CD8-positive, alpha-beta T cell (primary cell): ENCODE measurements at regions of chr11 and their contacts with region 1.

Region 1: GRCh38 chr11:14643697-14644225 is at the start of gene PDE3B:
- DNase-seq: peak; percentile 57 to 87 (median 74)
- ATAC-seq: peak; percentile 53
- H3K4me3 ChIP-seq: peak within 1 kb of the TSS; percentile 86 to 95
- H3K4me3 Mint-ChIP-seq: peak within 1 kb of the TSS; percentile 91
- H3K27ac ChIP-seq: peak within 1 kb of the TSS; percentile 66 to 86
- H3K27ac Mint-ChIP-seq: peak within 1 kb of the TSS; percentile 91
- H3K4me1 ChIP-seq: peaks cover 41% of the 10 kb centered on the region
- H3K4me1 Mint-ChIP-seq: peaks cover 54% of the 10 kb centered on the region
- H3K27me3 ChIP-seq: no peaks in the 10 kb centered on the region
- H3K27me3 Mint-ChIP-seq: no peaks in the 10 kb centered on the region
- CTCF ChIP-seq: no peak
- total RNA-seq, gene PDE3B: 144 to 146 TPM

Region 2: GRCh38 chr11:14519917-14520746 is 123.6 kb before region 1 on chr11 and contains the start of gene PSMA1:
- CTCF ChIA-PET with region 1: interaction called, 5 read pairs
- POLR2A ChIA-PET with region 1: interaction called, 6 read pairs
- intact Hi-C with region 1: loop called (anchors 2 to 5 kb)
- DNase-seq: peak; percentile 74 to 95 (median 90)
- ATAC-seq: peak; percentile 90
- H3K4me3 ChIP-seq: peak within 1 kb of the TSS; percentile 82 to 84
- H3K4me3 Mint-ChIP-seq: peak within 1 kb of the TSS; percentile 98
- H3K27ac ChIP-seq: peak within 1 kb of the TSS; percentile 82 to 87
- H3K27ac Mint-ChIP-seq: peak within 1 kb of the TSS; percentile 97
- H3K4me1 ChIP-seq: peaks cover 19% of the 10 kb centered on the region
- H3K4me1 Mint-ChIP-seq: peaks cover 32% of the 10 kb centered on the region
- H3K27me3 ChIP-seq: no peaks in the 10 kb centered on the region
- H3K27me3 Mint-ChIP-seq: no peaks in the 10 kb centered on the region
- CTCF ChIP-seq: no peak
- total RNA-seq, gene PSMA1: 177 to 193 TPM

Region 3: GRCh38 chr11:14554959-14555358 is 88.8 kb before region 1 on chr11:
- CTCF ChIA-PET with region 1: interaction called, 3 read pairs
- POLR2A ChIA-PET with region 1: interaction called, 19 read pairs
- intact Hi-C with region 1: loop called in 1 of 2 experiments (anchors 5 kb)
- DNase-seq: peak in 4 of 9 experiments; percentile 46 to 90 (median 70)
- ATAC-seq: peak; percentile 87
- H3K4me3 ChIP-seq: no peak overlapping the region
- H3K4me3 Mint-ChIP-seq: no peak overlapping the region
- H3K27ac ChIP-seq: peak overlapping the region; percentile 53 to 67
- H3K27ac Mint-ChIP-seq: peak overlapping the region; percentile 97
- H3K4me1 ChIP-seq: peaks cover 33% of the 10 kb centered on the region
- H3K4me1 Mint-ChIP-seq: peaks cover 51% of the 10 kb centered on the region
- H3K27me3 ChIP-seq: no peaks in the 10 kb centered on the region
- H3K27me3 Mint-ChIP-seq: no peaks in the 10 kb centered on the region
- CTCF ChIP-seq: no peak

Region 4: DNA sequence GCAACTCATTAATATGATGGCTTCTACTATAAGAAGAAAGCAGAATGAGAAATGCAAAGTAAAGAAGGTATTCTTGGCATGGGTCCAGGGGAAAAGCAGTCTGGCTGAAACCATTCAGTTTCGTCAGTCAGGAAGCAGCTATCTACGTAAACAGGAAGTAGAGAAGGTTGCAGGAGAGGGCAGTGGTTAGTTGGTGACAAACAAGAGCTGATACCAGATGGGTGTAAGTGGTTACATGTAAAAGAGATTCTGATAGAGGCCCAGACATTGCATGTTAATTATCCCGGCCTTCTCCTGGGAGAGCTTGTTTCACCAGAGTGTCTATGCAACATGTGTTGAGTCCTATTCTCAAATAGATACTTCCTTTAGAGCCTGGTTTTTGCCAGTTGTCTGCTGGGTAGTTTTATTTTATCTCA is 65.2 kb before region 1 on chr11:
- CTCF ChIA-PET with region 1: interaction called, 8 read pairs
- POLR2A ChIA-PET with region 1: interaction called, 61 read pairs
- intact Hi-C with region 1: loop called (anchors 2 to 5 kb)
- DNase-seq: peak; percentile 32 to 98 (median 74)
- ATAC-seq: peak; percentile 90
- H3K4me3 ChIP-seq: no peak overlapping the region
- H3K4me3 Mint-ChIP-seq: peak overlapping the region; percentile 56
- H3K27ac ChIP-seq: peak overlapping the region; percentile 58 to 85
- H3K27ac Mint-ChIP-seq: peak overlapping the region; percentile 96
- H3K4me1 ChIP-seq: peaks cover 42% of the 10 kb centered on the region
- H3K4me1 Mint-ChIP-seq: peaks cover 64% of the 10 kb centered on the region
- H3K27me3 ChIP-seq: no peaks in the 10 kb centered on the region
- H3K27me3 Mint-ChIP-seq: no peaks in the 10 kb centered on the region
- CTCF ChIP-seq: no peak

Region 5: GRCh38 chr11:14593684-14594083 is 50.1 kb before region 1 on chr11:
- CTCF ChIA-PET with region 1: no interaction called
- POLR2A ChIA-PET with region 1: no interaction called
- intact Hi-C with region 1: no loop called
- DNase-seq: no peak
- ATAC-seq: no peak
- H3K4me3 ChIP-seq: no peak overlapping the region
- H3K4me3 Mint-ChIP-seq: no peak overlapping the region
- H3K27ac ChIP-seq: no peak overlapping the region
- H3K27ac Mint-ChIP-seq: peak overlapping the region; percentile 72
- H3K4me1 ChIP-seq: no peaks in the 10 kb centered on the region
- H3K4me1 Mint-ChIP-seq: peaks cover 33% of the 10 kb centered on the region
- H3K27me3 ChIP-seq: no peaks in the 10 kb centered on the region
- H3K27me3 Mint-ChIP-seq: no peaks in the 10 kb centered on the region
- CTCF ChIP-seq: no peak

Region 6: DNA sequence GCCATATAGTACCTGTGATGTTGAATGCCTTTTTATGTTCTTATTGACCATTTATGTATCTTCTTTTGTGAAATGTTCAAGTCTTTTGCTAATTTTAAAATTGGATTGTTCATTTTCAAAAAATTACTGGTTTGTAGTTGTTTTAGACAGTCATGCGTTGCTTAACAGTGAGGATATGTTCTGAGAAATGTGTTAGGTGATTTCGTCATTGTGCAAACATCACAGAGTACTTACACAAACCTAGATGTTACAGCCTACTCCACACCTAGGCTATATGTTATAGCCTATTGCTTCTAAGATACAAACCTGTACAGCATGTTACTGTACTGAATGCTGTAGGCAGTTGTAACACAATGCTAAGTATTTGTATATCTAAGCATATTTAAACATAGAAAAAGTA is 32.3 kb after region 1 on chr11:
- CTCF ChIA-PET with region 1: interaction called, 3 read pairs
- POLR2A ChIA-PET with region 1: interaction called, 6 read pairs
- intact Hi-C with region 1: loop called in 1 of 2 experiments (anchors 5 kb)
- DNase-seq: no peak
- ATAC-seq: no peak
- H3K4me3 ChIP-seq: no peak overlapping the region
- H3K4me3 Mint-ChIP-seq: no peak overlapping the region
- H3K27ac ChIP-seq: no peak overlapping the region
- H3K27ac Mint-ChIP-seq: no peak overlapping the region
- H3K4me1 ChIP-seq: peaks cover 17% of the 10 kb centered on the region
- H3K4me1 Mint-ChIP-seq: peaks cover 76% of the 10 kb centered on the region
- H3K27me3 ChIP-seq: no peaks in the 10 kb centered on the region
- H3K27me3 Mint-ChIP-seq: no peaks in the 10 kb centered on the region
- CTCF ChIP-seq: no peak

Region 7: DNA sequence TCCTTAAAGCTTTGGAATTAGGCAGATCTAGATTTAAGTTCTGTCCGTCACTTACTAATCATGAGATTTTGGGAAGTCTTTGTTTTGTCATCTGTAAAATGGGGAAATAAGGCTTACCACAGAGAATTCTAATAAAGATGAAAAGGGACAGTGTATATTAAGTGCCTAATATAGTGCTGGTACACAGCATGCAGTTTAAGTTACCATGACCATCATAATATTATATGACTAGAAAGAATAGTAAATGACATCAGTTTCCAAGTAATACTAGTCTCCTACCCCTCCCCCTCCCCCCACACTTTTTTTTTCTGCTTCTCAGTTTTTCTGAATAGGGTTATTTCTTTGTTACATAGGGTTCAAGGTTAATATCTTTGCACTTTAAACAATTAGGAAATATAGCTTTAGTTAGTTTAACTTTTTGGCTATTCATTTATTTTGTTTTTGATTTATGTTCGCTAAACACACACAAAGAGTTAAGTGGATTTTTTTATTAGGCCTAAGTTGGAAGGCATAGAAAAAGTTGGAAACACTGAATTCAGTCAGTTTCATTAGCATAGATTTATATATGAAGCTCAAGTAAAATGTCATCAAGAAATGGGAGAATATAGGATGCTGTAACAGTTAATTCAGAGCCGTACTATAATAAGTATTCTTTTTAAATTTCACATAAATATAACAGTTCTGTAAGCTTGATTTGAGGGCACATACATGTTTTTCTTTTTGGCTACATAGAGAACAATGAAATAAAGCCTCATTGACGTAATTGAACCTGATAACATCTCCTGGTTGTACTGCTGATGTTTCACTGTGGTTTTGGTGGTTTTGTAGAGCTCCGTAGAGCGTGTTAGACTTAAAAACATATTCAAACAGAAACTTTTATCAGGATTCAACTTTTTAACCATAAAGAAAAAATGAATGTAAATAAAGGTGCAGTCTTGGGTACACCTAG is 121.1 kb after region 1 on chr11:
- CTCF ChIA-PET with region 1: interaction called, 3 read pairs
- POLR2A ChIA-PET with region 1: interaction called, 32 read pairs
- intact Hi-C with region 1: loop called (anchors 2 to 5 kb)
- DNase-seq: peak in 5 of 9 experiments; percentile 22 to 96 (median 59)
- ATAC-seq: peak; percentile 75
- H3K4me3 ChIP-seq: peak overlapping the region in 1 of 2 experiments; percentile 3
- H3K4me3 Mint-ChIP-seq: peak overlapping the region; percentile 72
- H3K27ac ChIP-seq: peak overlapping the region; percentile 36 to 61
- H3K27ac Mint-ChIP-seq: no peak overlapping the region
- H3K4me1 ChIP-seq: peaks cover 86% of the 10 kb centered on the region
- H3K4me1 Mint-ChIP-seq: peaks cover 48% of the 10 kb centered on the region
- H3K27me3 ChIP-seq: peaks cover 0 to 3% of the 10 kb centered on the region in 2 experiments
- H3K27me3 Mint-ChIP-seq: no peaks in the 10 kb centered on the region
- CTCF ChIP-seq: no peak

Region 8: DNA sequence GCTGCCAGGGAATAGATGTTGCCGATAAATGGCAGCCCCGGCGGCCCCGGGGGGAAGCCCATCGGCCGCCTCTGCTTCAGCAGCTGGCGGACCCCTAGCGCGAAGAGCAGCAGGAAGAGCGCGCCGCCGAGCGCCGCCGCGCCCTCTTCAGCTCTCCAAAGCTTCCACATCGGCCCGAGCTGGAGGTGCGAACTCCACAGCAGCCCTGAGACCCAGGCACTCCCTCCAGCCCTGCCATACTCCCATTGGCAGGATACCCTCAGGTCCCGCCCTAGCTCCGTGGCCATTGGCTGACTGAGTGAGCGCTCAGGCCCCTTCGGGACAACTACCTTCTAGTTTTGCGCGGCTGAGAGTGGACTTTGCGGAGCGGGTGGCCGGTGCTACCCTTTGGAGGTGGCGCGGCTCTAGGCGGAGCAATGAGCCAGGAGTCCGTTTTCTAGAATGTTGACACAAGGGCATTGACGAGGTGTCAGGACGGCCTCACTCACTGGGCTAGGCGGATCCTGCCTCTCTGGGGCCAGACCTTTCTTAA is 248.3 kb after region 1 on chr11 and contains the start of gene CYP2R1:
- CTCF ChIA-PET with region 1: interaction called, 3 read pairs
- POLR2A ChIA-PET with region 1: interaction called, 7 read pairs
- intact Hi-C with region 1: loop called (anchors 5 kb)
- DNase-seq: peak; percentile 81 to 95 (median 89)
- ATAC-seq: peak; percentile 74
- H3K4me3 ChIP-seq: peak within 1 kb of the TSS; percentile 68 to 75
- H3K4me3 Mint-ChIP-seq: peak within 1 kb of the TSS; percentile 88
- H3K27ac ChIP-seq: peak within 1 kb of the TSS; percentile 49 to 79
- H3K27ac Mint-ChIP-seq: peak within 1 kb of the TSS; percentile 93
- H3K4me1 ChIP-seq: peaks cover 10% of the 10 kb centered on the region
- H3K4me1 Mint-ChIP-seq: peaks cover 42% of the 10 kb centered on the region
- H3K27me3 ChIP-seq: no peaks in the 10 kb centered on the region
- H3K27me3 Mint-ChIP-seq: no peaks in the 10 kb centered on the region
- CTCF ChIP-seq: no peak
- total RNA-seq, gene CYP2R1: 10.7 to 12.6 TPM